ENCODE measurements at regions of chr4 and their contacts with region 1.

Region 1: GRCh38 chr4:168923526-168924194 is 86.4 kb downstream of the CBR4 start:
- DNase-seq: peak; percentile 31
- ATAC-seq: peak; percentile 91
- H3K4me3 ChIP-seq: no peak overlapping the region
- H3K27ac ChIP-seq: no peak overlapping the region
- H3K4me1 ChIP-seq: no peaks in the 10 kb centered on the region
- H3K27me3 ChIP-seq: no peaks in the 10 kb centered on the region
- CTCF ChIP-seq: peak; percentile 68 to 73 (median 69); a peak in 5 of 6 replicates
- EP300 ChIP-seq: no peak
- POLR2A ChIP-seq: no peak
- RAD21 ChIP-seq: peak; percentile 84

Region 2: GRCh38 chr4:168514249-168514852 is 409.3 kb before region 1 on chr4:
- CTCF ChIA-PET with region 1: interaction called, 51 read pairs
- POLR2A ChIA-PET with region 1: no interaction called
- RAD21 ChIA-PET with region 1: interaction called, 12 read pairs
- SMC1A ChIA-PET with region 1: interaction called, 18 read pairs
- in situ Hi-C with region 1: loop called (anchors 5 kb)
- intact Hi-C with region 1: no loop called
- DNase-seq: no peak
- ATAC-seq: 0 out of 3 replicates have a peak, but pooled peaks have one; percentile 20
- H3K4me3 ChIP-seq: no peak overlapping the region
- H3K27ac ChIP-seq: no peak overlapping the region
- H3K4me1 ChIP-seq: no peaks in the 10 kb centered on the region
- H3K27me3 ChIP-seq: no peaks in the 10 kb centered on the region
- CTCF ChIP-seq: peak in 2 of 3 experiments; percentile 20 to 26; a peak in 2 of 6 replicates
- EP300 ChIP-seq: no peak
- POLR2A ChIP-seq: no peak
- RAD21 ChIP-seq: 0 out of 2 replicates have a peak, but pooled peaks have one; percentile 13

Region 3: GRCh38 chr4:168900080-168900479 is 23.6 kb before region 1 on chr4:
- CTCF ChIA-PET with region 1: interaction called, 10 read pairs
- POLR2A ChIA-PET with region 1: no interaction called
- RAD21 ChIA-PET with region 1: interaction called, 3 read pairs
- SMC1A ChIA-PET with region 1: no interaction called
- in situ Hi-C with region 1: no loop called
- intact Hi-C with region 1: no loop called
- DNase-seq: no peak
- ATAC-seq: no peak
- H3K4me3 ChIP-seq: no peak overlapping the region
- H3K27ac ChIP-seq: no peak overlapping the region
- H3K4me1 ChIP-seq: no peaks in the 10 kb centered on the region
- H3K27me3 ChIP-seq: no peaks in the 10 kb centered on the region
- CTCF ChIP-seq: no peak
- EP300 ChIP-seq: no peak
- POLR2A ChIP-seq: no peak
- RAD21 ChIP-seq: no peak

Region 4: DNA sequence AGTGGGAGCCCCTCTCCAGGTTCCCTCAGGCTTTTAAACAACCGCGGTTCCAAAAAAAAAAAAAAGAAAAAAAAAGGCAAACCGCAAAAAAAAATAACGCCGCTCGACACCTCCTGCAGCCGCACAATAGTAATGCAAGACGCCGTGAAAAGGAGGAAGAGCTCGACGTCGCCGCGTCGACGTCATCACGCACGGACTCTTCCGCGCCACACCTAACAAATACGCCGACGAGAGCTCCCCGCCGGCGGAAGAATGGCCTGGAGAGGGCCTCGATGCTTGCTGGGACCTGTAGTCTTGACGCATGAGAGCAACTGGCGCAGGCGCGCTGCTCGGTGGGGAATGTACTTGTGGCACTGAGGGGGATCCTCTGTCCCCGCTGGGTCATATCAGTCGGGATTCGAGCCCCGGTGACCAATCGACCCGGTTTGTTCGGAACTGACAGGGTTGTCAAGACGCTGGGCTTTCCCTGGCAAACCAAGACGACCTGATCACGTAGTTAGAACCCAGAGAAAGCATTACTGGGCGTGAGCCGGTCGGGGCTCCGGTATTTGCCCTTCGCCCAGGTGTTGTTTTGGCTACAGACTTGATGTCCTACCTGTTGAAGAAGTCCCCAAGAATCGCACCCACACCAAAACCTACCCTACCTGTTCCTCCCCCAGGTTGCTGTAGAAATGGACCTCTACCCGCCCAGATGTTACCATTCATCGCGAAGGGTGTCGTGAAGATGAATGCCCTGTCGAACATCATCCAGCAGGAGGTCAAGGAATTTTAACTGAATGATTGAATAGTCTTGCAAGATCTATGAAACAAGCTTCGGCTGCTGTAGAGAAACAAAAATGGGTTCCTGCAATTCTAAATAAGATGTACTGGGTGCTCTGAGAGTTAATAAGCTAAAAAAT is 86.7 kb after region 1 on chr4 and contains the start of gene CBR4:
- CTCF ChIA-PET with region 1: interaction called, 82 read pairs
- POLR2A ChIA-PET with region 1: no interaction called
- RAD21 ChIA-PET with region 1: interaction called, 57 read pairs
- SMC1A ChIA-PET with region 1: interaction called, 81 read pairs
- in situ Hi-C with region 1: loop called (anchors 5 kb)
- intact Hi-C with region 1: loop called (anchors 1 kb)
- DNase-seq: peak; percentile 94
- ATAC-seq: peak; percentile 96
- H3K4me3 ChIP-seq: peak within 1 kb of the TSS; percentile 86
- H3K27ac ChIP-seq: peak within 1 kb of the TSS; percentile 91
- H3K4me1 ChIP-seq: no peaks in the 10 kb centered on the region
- H3K27me3 ChIP-seq: no peaks in the 10 kb centered on the region
- CTCF ChIP-seq: peak; percentile 6 to 36 (median 35); a peak in 2 of 6 replicates
- EP300 ChIP-seq: no peak; a peak in 1 of 4 replicates
- POLR2A ChIP-seq: peak; percentile 86
- RAD21 ChIP-seq: 0 out of 2 replicates have a peak, but pooled peaks have one; percentile 11
- polyA plus RNA-seq, gene CBR4: 21.4 to 36.2 TPM

Region 5: DNA sequence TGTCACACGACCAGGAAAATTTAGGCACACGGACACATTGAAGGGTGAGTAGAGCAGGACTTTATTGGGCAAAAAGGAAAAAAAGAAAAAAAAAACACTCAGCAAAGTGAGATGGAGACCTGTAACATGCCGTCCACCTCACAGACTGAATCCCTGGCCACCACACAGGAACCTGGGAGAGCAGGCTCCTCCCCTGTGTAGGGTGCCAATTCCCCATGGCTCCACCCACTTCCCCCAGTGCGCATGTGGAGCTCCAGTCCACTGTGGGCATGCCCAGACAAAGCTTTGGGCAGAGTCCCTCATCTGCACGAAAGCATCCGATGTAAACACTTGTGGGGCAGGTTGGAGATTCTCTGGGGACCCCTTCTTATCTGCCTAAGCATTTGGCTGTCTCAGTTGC is 110.0 kb after region 1 on chr4:
- CTCF ChIA-PET with region 1: no interaction called
- POLR2A ChIA-PET with region 1: no interaction called
- RAD21 ChIA-PET with region 1: no interaction called
- SMC1A ChIA-PET with region 1: no interaction called
- in situ Hi-C with region 1: no loop called
- intact Hi-C with region 1: no loop called
- DNase-seq: no peak
- ATAC-seq: peak; percentile 46; the same call in 2 of the 3 replicates
- H3K4me3 ChIP-seq: no peak overlapping the region
- H3K27ac ChIP-seq: no peak overlapping the region
- H3K4me1 ChIP-seq: no peaks in the 10 kb centered on the region
- H3K27me3 ChIP-seq: no peaks in the 10 kb centered on the region
- CTCF ChIP-seq: no peak
- EP300 ChIP-seq: no peak
- POLR2A ChIP-seq: no peak
- RAD21 ChIP-seq: no peak

Region 6: DNA sequence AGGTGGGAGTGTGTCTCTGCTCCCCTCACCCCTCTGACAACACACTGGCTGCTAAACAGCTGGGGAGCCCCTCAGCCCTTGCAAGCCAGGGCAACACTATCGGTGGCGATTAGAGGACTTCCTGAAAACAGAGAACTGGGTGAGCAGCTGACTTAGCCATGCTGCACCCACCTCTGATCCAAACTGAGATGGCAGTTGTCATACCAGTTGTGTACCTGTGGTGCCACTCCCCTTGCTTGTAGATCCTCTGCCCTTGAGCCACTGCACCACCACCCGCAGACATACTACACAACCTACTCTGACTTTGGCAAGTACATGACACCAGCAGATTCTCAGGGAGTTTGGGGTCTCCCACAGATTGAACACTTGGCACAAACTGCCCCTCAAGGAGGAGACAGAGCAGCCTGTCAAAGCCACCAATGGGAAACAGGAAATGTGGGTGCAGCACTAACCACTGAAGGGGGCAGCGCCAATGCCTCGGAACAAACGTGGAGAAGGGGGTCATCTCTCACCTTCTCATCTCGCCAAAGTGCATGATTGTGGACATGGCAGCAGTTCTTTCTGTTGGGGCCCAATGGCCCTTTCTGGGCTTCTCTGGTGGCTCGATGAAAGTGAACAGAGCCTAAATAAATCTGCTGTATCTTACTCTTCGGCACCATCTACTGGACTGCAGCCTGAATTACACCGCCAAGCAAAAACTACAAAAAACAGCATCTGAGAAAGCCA is 568.9 kb after region 1 on chr4:
- CTCF ChIA-PET with region 1: interaction called, 60 read pairs
- POLR2A ChIA-PET with region 1: no interaction called
- RAD21 ChIA-PET with region 1: interaction called, 8 read pairs
- SMC1A ChIA-PET with region 1: interaction called, 53 read pairs
- in situ Hi-C with region 1: loop called (anchors 5 kb)
- intact Hi-C with region 1: no loop called
- DNase-seq: peak; percentile 13
- ATAC-seq: peak; percentile 74
- H3K4me3 ChIP-seq: no peak overlapping the region
- H3K27ac ChIP-seq: no peak overlapping the region
- H3K4me1 ChIP-seq: no peaks in the 10 kb centered on the region
- H3K27me3 ChIP-seq: no peaks in the 10 kb centered on the region
- CTCF ChIP-seq: peak; percentile 57 to 68 (median 67)
- EP300 ChIP-seq: no peak
- POLR2A ChIP-seq: no peak
- RAD21 ChIP-seq: peak; percentile 71

Measured in GM12878 (cell line).